CD8-positive, alpha-beta T cell (primary cell): ENCODE measurements at regions of chr10 and their contacts with region 1.

Region 1: DNA sequence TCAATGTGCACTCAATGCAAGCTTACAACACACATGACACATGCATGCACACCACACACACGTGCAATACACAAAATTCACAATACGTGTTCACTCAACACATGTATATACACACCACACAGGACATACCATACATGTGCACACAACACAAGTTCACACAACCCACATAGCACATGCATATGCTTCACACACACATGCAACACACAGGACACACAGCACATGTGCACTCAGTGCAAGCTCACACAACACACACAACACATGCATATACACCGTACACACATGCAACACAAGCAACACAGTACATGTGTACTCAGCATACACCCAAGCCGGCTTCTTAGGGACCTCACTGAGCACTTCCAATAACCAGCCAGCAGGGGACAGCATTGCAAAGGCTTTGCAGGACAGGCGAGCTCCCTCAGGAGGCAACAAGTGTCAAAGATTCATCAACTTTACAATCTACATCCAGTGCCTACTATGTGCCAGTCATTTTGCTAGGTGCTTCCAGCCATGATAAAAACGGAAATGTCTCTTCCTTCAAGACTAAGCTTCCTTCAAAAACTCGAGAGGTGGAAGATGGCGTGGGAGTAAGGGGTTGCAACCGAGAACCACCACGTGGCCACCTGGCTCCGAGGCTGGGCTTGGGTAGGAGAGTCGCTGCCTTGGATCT is 61.1 kb downstream of the JCAD start:
- DNase-seq: peak; percentile 57 to 86 (median 77)
- ATAC-seq: peak; percentile 95
- H3K4me3 ChIP-seq: no peak overlapping the region
- H3K4me3 Mint-ChIP-seq: no peak overlapping the region
- H3K27ac ChIP-seq: no peak overlapping the region
- H3K27ac Mint-ChIP-seq: no peak overlapping the region
- H3K4me1 ChIP-seq: no peaks in the 10 kb centered on the region
- H3K4me1 Mint-ChIP-seq: peaks cover 5% of the 10 kb centered on the region
- H3K27me3 ChIP-seq: peaks cover 8% of the 10 kb centered on the region in 2 experiments
- H3K27me3 Mint-ChIP-seq: peaks cover 49% of the 10 kb centered on the region
- CTCF ChIP-seq: peak; percentile 99

Region 2: GRCh38 chr10:30013757-30014156 is 15.5 kb after region 1 on chr10:
- CTCF ChIA-PET with region 1: interaction called, 15 read pairs
- POLR2A ChIA-PET with region 1: no interaction called
- intact Hi-C with region 1: no loop called
- DNase-seq: no peak
- ATAC-seq: no peak
- H3K4me3 ChIP-seq: no peak overlapping the region
- H3K4me3 Mint-ChIP-seq: no peak overlapping the region
- H3K27ac ChIP-seq: no peak overlapping the region
- H3K27ac Mint-ChIP-seq: no peak overlapping the region
- H3K4me1 ChIP-seq: no peaks in the 10 kb centered on the region
- H3K4me1 Mint-ChIP-seq: no peaks in the 10 kb centered on the region
- H3K27me3 ChIP-seq: peaks cover 3 to 16% of the 10 kb centered on the region in 2 experiments
- H3K27me3 Mint-ChIP-seq: peaks cover 68% of the 10 kb centered on the region
- CTCF ChIP-seq: no peak

Region 3: DNA sequence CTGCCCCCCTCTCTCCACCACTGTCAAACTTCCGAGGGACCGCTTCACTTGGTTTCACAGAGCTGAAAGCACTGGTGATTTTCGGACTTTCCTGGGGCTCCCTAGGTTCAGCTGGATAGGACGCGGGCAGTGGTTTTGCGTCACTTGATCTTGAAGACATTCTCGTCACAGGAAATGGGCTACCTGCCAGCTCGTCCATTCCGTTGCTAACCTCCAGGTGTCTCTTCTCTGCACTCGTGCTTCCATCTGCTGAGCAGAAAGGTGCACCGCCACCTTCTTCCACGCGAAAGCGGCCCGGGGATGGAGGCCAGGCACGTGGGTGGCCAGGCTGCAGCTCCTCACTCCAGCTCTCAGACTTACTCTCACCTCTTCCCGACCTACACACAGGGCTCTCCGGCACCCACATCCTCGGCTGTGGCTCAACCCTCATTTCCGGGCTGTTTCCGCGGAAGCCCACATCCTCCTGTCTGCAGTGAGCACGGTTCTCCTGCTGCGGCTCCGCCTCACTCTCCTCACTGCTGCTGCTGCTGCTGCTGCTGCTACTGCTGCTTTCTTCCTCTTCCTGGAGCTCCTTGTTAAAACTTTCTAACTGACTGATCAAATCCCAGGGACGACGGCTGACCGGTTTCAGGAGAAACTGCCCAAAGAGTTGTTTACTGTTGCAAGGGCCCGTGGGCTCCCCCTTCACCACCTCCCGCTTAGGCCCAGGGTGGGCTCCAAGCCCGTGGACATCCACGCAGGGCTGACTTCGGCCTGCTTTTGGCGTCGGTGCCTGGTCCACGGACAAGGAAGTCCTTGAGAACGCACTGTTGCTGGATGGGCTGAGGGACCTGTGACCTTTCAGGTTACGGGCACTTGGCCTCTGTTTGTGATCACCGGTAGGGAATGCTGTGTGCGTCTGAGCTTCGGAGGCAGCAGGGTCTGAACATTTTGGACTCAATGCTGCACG is 29.1 kb after region 1 on chr10:
- CTCF ChIA-PET with region 1: interaction called, 10 read pairs
- POLR2A ChIA-PET with region 1: no interaction called
- intact Hi-C with region 1: no loop called
- DNase-seq: peak; percentile 79 to 96 (median 85)
- ATAC-seq: peak; percentile 88
- H3K4me3 ChIP-seq: peak overlapping the region; percentile 33 to 53
- H3K4me3 Mint-ChIP-seq: peak overlapping the region; percentile 62
- H3K27ac ChIP-seq: peak overlapping the region in 1 of 2 experiments; percentile 41
- H3K27ac Mint-ChIP-seq: peak overlapping the region; percentile 80
- H3K4me1 ChIP-seq: peaks cover 37% of the 10 kb centered on the region
- H3K4me1 Mint-ChIP-seq: peaks cover 35% of the 10 kb centered on the region
- H3K27me3 ChIP-seq: peaks cover 24 to 34% of the 10 kb centered on the region in 2 experiments
- H3K27me3 Mint-ChIP-seq: peaks cover 55% of the 10 kb centered on the region
- CTCF ChIP-seq: peak; percentile 32

Region 4: DNA sequence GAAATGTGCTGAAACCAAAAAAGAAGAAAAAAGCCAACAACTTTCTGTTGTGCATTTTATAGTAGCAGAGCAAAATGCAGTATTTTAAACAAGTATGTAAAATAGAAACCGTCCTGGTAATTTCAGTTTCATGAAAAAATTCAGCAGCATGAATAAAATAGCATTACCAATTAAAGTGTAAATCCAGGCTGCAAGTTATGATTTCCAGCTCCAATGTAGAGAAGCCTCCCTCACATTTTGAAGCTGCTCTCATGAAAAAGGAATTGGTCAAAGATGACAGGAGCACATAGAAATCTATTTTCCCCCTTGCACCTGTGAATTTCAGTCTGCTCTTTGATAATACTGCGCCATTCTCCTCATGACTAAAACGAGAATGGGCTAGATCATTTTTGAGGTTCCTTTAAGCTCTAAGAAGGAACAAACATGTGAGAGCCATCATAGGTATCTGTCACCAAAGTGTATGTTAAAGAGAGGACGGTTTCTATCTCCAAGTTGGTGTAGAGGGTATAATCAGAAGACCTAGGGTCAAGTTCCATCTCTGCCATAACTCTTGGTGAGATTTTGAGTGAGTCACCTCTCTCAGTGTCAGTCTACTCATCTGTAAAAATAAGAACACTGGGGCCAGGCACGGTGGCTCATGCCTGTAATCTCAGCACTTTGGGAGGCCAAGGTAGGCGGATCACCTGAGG is 243.3 kb after region 1 on chr10:
- CTCF ChIA-PET with region 1: interaction called, 15 read pairs
- POLR2A ChIA-PET with region 1: no interaction called
- intact Hi-C with region 1: loop called in 1 of 2 experiments (anchors 1 kb)
- DNase-seq: no peak
- ATAC-seq: no peak
- H3K4me3 ChIP-seq: no peak overlapping the region
- H3K4me3 Mint-ChIP-seq: no peak overlapping the region
- H3K27ac ChIP-seq: no peak overlapping the region
- H3K27ac Mint-ChIP-seq: no peak overlapping the region
- H3K4me1 ChIP-seq: no peaks in the 10 kb centered on the region
- H3K4me1 Mint-ChIP-seq: no peaks in the 10 kb centered on the region
- H3K27me3 ChIP-seq: no peaks in the 10 kb centered on the region
- H3K27me3 Mint-ChIP-seq: peaks cover 10% of the 10 kb centered on the region
- CTCF ChIP-seq: no peak

Region 5: DNA sequence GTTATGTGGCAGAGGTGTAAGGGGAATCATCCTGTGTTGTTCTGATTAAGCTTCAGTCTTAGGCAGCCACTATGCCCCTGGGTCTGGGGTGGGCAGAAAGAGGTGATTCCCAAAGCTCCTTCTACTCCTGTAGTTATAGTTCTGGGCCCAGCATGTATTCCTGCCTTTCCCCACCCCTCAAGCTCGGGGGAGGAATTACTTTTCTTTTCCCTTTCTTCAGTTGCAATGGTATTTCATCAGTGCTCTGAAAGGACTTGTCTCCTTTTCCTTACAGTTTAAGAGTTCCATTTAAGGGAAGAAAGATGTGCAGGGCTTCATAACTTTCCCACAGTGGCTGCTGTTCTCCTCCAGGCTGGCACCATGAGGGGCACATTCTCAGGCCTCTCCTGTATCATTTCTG is 256.7 kb after region 1 on chr10:
- CTCF ChIA-PET with region 1: no interaction called
- POLR2A ChIA-PET with region 1: no interaction called
- intact Hi-C with region 1: no loop called
- DNase-seq: no peak
- ATAC-seq: no peak
- H3K4me3 ChIP-seq: no peak overlapping the region
- H3K4me3 Mint-ChIP-seq: no peak overlapping the region
- H3K27ac ChIP-seq: no peak overlapping the region
- H3K27ac Mint-ChIP-seq: no peak overlapping the region
- H3K4me1 ChIP-seq: no peaks in the 10 kb centered on the region
- H3K4me1 Mint-ChIP-seq: no peaks in the 10 kb centered on the region
- H3K27me3 ChIP-seq: no peaks in the 10 kb centered on the region
- H3K27me3 Mint-ChIP-seq: peaks cover 16% of the 10 kb centered on the region
- CTCF ChIP-seq: no peak

Region 6: GRCh38 chr10:30324448-30325110 is 326.3 kb after region 1 on chr10:
- CTCF ChIA-PET with region 1: interaction called, 4 read pairs
- POLR2A ChIA-PET with region 1: no interaction called
- intact Hi-C with region 1: loop called (anchors 5 to 10 kb)
- DNase-seq: no peak
- ATAC-seq: no peak
- H3K4me3 ChIP-seq: no peak overlapping the region
- H3K4me3 Mint-ChIP-seq: no peak overlapping the region
- H3K27ac ChIP-seq: no peak overlapping the region
- H3K27ac Mint-ChIP-seq: no peak overlapping the region
- H3K4me1 ChIP-seq: no peaks in the 10 kb centered on the region
- H3K4me1 Mint-ChIP-seq: peaks cover 8% of the 10 kb centered on the region
- H3K27me3 ChIP-seq: no peaks in the 10 kb centered on the region
- H3K27me3 Mint-ChIP-seq: no peaks in the 10 kb centered on the region
- CTCF ChIP-seq: no peak

Region 7: DNA sequence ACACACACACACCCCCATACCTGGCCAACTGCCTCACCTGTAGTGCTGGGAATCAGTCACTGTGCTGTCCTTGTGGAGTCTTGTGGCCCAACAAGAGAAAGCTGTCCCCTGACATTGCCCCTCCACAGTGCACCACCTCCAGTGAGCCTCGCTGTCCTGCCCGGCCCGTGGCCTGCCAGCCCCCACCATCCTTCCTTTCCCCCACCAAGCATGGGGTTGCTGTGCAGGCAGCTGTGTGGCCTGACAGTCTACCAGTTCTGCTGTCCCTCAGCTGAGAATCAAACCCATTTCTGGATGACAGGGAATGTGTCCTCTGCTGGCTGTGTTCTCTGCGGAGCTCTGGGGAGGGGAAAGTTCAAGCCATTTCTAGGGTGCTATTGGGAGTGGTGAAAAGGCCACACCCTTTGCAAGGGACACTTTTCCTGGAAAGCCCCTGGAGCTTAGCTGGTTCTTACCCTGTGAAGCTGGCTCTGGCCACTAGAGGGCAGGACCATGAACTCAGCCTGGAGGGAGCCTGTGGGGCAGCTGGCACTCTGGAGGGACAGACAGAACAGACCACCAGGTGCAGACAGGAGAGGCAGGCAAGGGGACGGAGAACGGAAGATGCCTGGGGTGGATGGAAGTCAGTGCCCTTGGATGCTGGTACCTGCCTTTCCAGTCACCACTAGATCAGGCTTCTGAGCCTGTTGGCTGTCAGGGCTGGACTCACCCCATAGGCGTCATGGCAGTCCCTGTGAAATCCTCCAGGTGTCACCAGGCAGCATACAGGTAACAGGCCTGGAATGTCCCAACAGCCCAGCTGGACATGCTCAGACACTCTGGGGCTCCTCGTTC is 361.3 kb after region 1 on chr10:
- CTCF ChIA-PET with region 1: interaction called, 10 read pairs
- POLR2A ChIA-PET with region 1: no interaction called
- intact Hi-C with region 1: no loop called
- DNase-seq: peak; percentile 30 to 76 (median 59)
- ATAC-seq: peak; percentile 88
- H3K4me3 ChIP-seq: no peak overlapping the region
- H3K4me3 Mint-ChIP-seq: no peak overlapping the region
- H3K27ac ChIP-seq: no peak overlapping the region
- H3K27ac Mint-ChIP-seq: no peak overlapping the region
- H3K4me1 ChIP-seq: peaks cover 3% of the 10 kb centered on the region
- H3K4me1 Mint-ChIP-seq: no peaks in the 10 kb centered on the region
- H3K27me3 ChIP-seq: peaks cover 0 to 4% of the 10 kb centered on the region in 2 experiments
- H3K27me3 Mint-ChIP-seq: peaks cover 3% of the 10 kb centered on the region
- CTCF ChIP-seq: peak; percentile 60

Region 8: GRCh38 chr10:30384701-30385201 is 386.5 kb after region 1 on chr10:
- CTCF ChIA-PET with region 1: interaction called, 11 read pairs
- POLR2A ChIA-PET with region 1: no interaction called
- intact Hi-C with region 1: loop called in 1 of 2 experiments (anchors 2 kb)
- DNase-seq: peak in 2 of 9 experiments; percentile 19 to 31
- ATAC-seq: peak; percentile 56
- H3K4me3 ChIP-seq: no peak overlapping the region
- H3K4me3 Mint-ChIP-seq: no peak overlapping the region
- H3K27ac ChIP-seq: no peak overlapping the region
- H3K27ac Mint-ChIP-seq: no peak overlapping the region
- H3K4me1 ChIP-seq: no peaks in the 10 kb centered on the region
- H3K4me1 Mint-ChIP-seq: no peaks in the 10 kb centered on the region
- H3K27me3 ChIP-seq: peaks cover 0 to 2% of the 10 kb centered on the region in 2 experiments
- H3K27me3 Mint-ChIP-seq: peaks cover 14% of the 10 kb centered on the region
- CTCF ChIP-seq: peak; percentile 21